ENCODE measurements at regions of chr1 and their contacts with region 1.

Region 1: DNA sequence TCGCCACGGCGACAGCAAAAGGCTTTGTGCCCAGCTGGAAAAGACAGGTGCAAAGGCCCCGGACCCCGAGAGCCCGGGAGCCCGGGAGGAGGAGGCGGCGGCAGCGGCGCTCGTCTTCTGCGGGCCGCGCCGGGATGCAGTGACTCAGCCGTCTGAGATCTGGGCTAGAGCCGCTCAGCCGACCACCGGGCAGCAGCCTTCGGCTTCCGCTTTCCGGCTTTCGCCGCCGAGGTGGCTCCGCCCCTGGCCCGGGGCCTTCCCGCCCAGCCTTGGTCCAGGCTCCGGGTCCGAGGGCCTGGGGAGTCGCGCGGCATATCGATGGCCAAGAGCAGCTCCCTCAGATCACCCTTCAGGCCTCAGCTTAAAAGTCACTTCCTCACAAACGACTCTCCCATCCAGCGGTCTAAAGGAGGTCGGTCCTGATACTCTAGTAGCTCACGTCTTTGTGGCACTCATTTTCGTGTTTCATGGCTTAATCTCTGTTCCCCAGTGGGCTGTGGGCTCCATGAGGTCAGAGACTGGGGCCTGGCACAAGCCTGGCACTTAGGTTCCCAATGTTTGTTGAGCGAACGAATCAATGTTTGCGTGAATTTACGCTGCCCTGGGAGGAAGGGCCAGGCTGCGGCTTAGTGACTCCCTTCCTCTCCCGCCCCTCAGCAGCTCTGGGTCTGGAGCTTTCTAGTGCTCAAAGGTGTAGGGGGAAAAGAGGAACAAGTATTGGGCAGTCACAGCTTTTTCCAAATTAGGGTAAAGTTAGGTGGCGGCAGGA is at the start of gene PHTF1:
- DNase-seq: peak; percentile 83
- ATAC-seq: peak; percentile 93
- total RNA-seq, gene PHTF1: 7.3 TPM

Region 2: GRCh38 chr1:113811888-113812660 is 52.6 kb after region 1 on chr1 and contains the start of gene RSBN1:
- intact Hi-C with region 1: loop called (anchors 10 kb)
- DNase-seq: peak; percentile 99
- ATAC-seq: peak; percentile 97
- total RNA-seq, gene RSBN1: 11.6 TPM

Measured in left ventricle myocardium superior (tissue), 1 donor.